Dorsolateral prefrontal cortex (tissue), 120 donors: ENCODE measurements at regions of chr12 and their contacts with region 1.

Region 1: GRCh38 chr12:69879041-69879960 is 54.3 kb downstream of the MYRFL start:
- DNase-seq: peak; percentile 58 to 89 (median 79)
- H3K4me3 ChIP-seq: peak overlapping the region in 58 of 59 donors; percentile 16 to 65 (median 47)
- H3K27ac ChIP-seq: peak overlapping the region in 6 of 59 donors; percentile 52 to 77 (median 66)
- H3K27me3 ChIP-seq: no peaks in the 10 kb centered on the region
- CTCF ChIP-seq: peak; percentile 66 to 98 (median 92)

Region 2: DNA sequence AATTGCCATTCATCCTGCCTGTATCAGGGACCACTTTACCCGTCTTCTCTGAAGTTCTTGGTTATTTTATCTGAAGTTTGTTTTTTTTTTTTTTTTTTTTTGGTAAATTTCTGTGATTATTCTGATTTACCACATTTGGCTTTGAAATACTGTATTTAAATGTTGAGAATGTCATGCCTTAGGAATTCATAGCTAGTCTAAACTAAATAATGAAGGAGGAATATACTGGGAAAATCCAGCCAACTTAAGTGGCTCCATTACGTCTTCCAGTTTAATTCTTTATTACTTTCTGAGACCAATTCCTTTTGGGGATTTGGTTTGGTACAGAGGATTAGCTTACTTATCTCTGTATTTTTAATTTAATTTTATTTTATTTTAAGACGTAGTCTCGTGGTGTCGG is 426.5 kb after region 1 on chr12:
- intact Hi-C with region 1: no loop called
- DNase-seq: no peak
- H3K4me3 ChIP-seq: no peak overlapping the region
- H3K27ac ChIP-seq: no peak overlapping the region
- H3K27me3 ChIP-seq: no peaks in the 10 kb centered on the region
- CTCF ChIP-seq: no peak

Region 3: GRCh38 chr12:70576346-70577282 is 697.3 kb after region 1 on chr12:
- intact Hi-C with region 1: loop called (anchors 5 kb)
- DNase-seq: peak in 1 of 10 donors; percentile 39
- H3K4me3 ChIP-seq: peak overlapping the region in 26 of 59 donors; percentile 0 to 43 (median 26)
- H3K27ac ChIP-seq: peak overlapping the region in 53 of 59 donors; percentile 7 to 88 (median 63)
- H3K27me3 ChIP-seq: no peaks in the 10 kb centered on the region
- CTCF ChIP-seq: peak; percentile 77 to 99 (median 90)

Region 4: GRCh38 chr12:70719672-70720420 is 840.5 kb after region 1 on chr12:
- intact Hi-C with region 1: loop called (anchors 5 kb)
- DNase-seq: peak in 8 of 10 donors; percentile 21 to 68 (median 48)
- H3K4me3 ChIP-seq: peak overlapping the region; percentile 7 to 67 (median 49)
- H3K27ac ChIP-seq: peak overlapping the region in 25 of 59 donors; percentile 2 to 73 (median 46)
- H3K27me3 ChIP-seq: no peaks in the 10 kb centered on the region
- CTCF ChIP-seq: peak; percentile 65 to 99 (median 94)

Region 5: GRCh38 chr12:70733385-70733784 is 854.1 kb after region 1 on chr12:
- intact Hi-C with region 1: loop called in 1 of 2 experiments (anchors 2 kb)
- DNase-seq: peak in 3 of 10 donors; percentile 39 to 57 (median 52)
- H3K4me3 ChIP-seq: no peak overlapping the region
- H3K27ac ChIP-seq: no peak overlapping the region
- H3K27me3 ChIP-seq: no peaks in the 10 kb centered on the region
- CTCF ChIP-seq: peak; percentile 42 to 91 (median 81)

Region 6: GRCh38 chr12:70849265-70849960 is 970.1 kb after region 1 on chr12:
- intact Hi-C with region 1: loop called in 1 of 2 experiments (anchors 10 kb)
- DNase-seq: no peak
- H3K4me3 ChIP-seq: no peak overlapping the region
- H3K27ac ChIP-seq: no peak overlapping the region
- H3K27me3 ChIP-seq: no peaks in the 10 kb centered on the region
- CTCF ChIP-seq: peak; percentile 30 to 84 (median 66)

Region 7: DNA sequence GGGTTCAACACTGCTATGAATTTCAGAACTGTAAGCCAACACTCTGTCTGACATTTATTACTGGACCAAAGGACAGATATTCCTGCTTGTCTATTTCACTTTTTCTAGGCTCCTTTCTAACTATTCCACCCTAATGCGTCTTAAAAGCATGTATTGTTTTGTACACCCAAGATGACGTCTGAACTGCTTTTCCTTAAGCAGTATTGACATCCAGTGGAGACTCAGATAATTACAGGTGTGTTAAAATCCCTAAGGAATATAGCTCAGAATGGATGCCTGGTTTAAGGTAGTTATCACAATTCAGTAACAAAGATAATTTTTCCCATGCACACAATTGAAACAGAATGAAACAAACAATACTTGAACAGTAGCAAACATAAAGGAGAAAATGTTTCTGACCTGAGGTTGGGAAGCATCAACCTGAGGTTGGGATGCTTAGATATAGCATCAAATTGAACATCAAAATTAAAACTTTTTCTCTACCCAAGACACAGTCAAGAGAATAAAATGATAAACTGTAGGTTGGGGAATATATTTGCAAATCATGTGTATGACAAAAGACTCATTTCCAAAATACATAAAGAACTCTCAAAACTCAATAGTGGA is 1135.0 kb after region 1 on chr12:
- intact Hi-C with region 1: loop called in 1 of 2 experiments (anchors 10 kb)
- DNase-seq: no peak
- H3K4me3 ChIP-seq: peak overlapping the region in 3 of 59 donors; percentile 1 to 22 (median 18)
- H3K27ac ChIP-seq: no peak overlapping the region
- H3K27me3 ChIP-seq: peaks cover 0 to 4% (median 0%) of the 10 kb centered on the region in 45 donors
- CTCF ChIP-seq: peak; percentile 22 to 66 (median 50)

Region 8: DNA sequence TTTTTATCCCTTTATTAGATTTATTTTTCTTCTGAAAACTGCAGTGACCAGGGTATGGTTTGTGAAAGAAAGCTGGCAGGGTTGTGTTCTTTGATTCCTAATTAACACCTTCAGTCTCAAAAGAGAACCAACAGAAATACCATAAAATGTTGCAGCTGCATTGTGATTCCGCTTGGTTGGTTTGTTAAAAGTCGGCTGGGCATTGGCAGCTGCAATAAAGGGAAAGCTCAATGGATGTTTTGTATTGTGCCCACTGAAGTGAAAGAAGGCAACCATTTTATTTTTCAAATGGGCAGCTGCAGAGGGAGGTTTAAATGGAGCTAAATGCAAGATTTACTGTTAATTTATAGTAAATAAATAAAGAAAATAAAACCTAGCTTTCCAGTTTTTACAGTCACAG is 1577.0 kb after region 1 on chr12:
- intact Hi-C with region 1: no loop called
- DNase-seq: peak in 2 of 10 donors; percentile 23 to 47
- H3K4me3 ChIP-seq: peak overlapping the region in 49 of 59 donors; percentile 0 to 61 (median 32)
- H3K27ac ChIP-seq: peak overlapping the region in 58 of 59 donors; percentile 66 to 99 (median 92)
- H3K27me3 ChIP-seq: peaks cover 0 to 6% (median 0%) of the 10 kb centered on the region in 45 donors
- CTCF ChIP-seq: peak in 5 of 56 donors; percentile 9 to 24 (median 19)